ENCODE measurements at regions of chr9 and their contacts with region 1.

Region 1: GRCh38 chr9:98974994-98975712 is 31.4 kb downstream of the COL15A1 start:
- DNase-seq: peak; percentile 84
- ATAC-seq: peak; percentile 94
- H3K4me3 ChIP-seq: peak overlapping the region; percentile 50; the same call in 1 of the 2 replicates
- H3K27ac ChIP-seq: no peak overlapping the region
- H3K4me1 ChIP-seq: 0 out of 2 replicates have a peak, but pooled peaks cover 3% of the 10 kb centered on the region
- H3K27me3 ChIP-seq: no peaks in the 10 kb centered on the region
- CTCF ChIP-seq: peak; percentile 84

Region 2: GRCh38 chr9:98860871-98861293 is 114.3 kb before region 1 on chr9:
- CTCF ChIA-PET with region 1: interaction called, 4 read pairs
- POLR2A ChIA-PET with region 1: no interaction called
- intact Hi-C with region 1: loop called (anchors 1 kb)
- DNase-seq: peak; percentile 70
- ATAC-seq: peak; percentile 54
- H3K4me3 ChIP-seq: no peak overlapping the region
- H3K27ac ChIP-seq: peak overlapping the region; percentile 97
- H3K4me1 ChIP-seq: peaks cover 25% of the 10 kb centered on the region
- H3K27me3 ChIP-seq: no peaks in the 10 kb centered on the region
- CTCF ChIP-seq: peak; percentile 57